ENCODE measurements at regions of chr5 and their contacts with region 1.

Region 1: DNA sequence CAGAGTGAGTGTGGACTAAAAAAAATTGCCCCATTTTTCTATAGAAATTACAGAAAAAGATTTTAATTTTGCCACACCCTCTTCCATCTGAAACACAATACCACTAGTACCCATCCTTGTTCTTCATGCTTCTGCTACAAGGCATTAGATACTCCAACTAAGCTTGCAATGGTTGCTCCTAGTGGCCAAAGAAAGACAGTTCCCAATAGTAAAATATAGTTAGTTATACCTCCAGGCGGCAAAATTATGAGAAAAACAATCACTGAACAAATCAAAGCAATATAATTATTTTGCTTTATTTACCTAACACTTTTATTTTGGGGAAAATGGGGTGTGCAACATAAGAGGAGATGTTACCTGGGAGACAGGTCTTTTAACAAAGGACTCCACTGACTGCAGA is 101.2 kb downstream of the RAPGEF6 start:
- DNase-seq: peak in 1 of 35 experiments; percentile 46
- ATAC-seq: no peak
- H3K4me3 ChIP-seq: no peak overlapping the region
- H3K4me3 Mint-ChIP-seq: peak overlapping the region in 2 of 3 donors; percentile 11 to 72
- H3K27ac ChIP-seq: peak overlapping the region; percentile 33
- H3K27ac Mint-ChIP-seq: peak overlapping the region; percentile 73 to 90
- H3K4me1 ChIP-seq: peaks cover 26 to 74% of the 10 kb centered on the region in 2 experiments
- H3K4me1 Mint-ChIP-seq: peaks cover 80 to 84% (median 81%) of the 10 kb centered on the region in 3 donors
- H3K27me3 ChIP-seq: no peaks in the 10 kb centered on the region
- H3K27me3 Mint-ChIP-seq: no peaks in the 10 kb centered on the region

Region 2: DNA sequence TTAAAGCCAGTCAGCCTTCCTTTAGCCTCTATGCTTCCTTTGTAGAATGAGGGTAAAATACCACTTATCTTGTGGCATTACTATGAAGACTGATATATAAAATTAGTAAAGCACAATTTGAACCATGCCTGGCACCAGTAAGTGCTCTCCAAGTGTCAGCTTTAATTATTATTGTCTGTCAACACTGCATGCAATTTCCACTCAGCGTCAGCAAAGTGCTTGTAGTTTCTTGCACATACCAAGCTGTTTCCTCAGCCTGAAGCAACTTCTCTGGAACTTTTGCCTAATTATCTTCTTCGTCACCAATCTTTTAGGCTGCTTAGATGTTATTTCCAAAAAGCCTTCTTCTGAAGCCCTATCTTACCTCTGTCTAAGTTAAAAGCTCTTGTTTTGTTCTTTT is 92.7 kb before region 1 on chr5:
- CTCF ChIA-PET with region 1: no interaction called
- POLR2A ChIA-PET with region 1: no interaction called
- DNase-seq: no peak
- ATAC-seq: no peak
- H3K4me3 ChIP-seq: no peak overlapping the region
- H3K4me3 Mint-ChIP-seq: no peak overlapping the region
- H3K27ac ChIP-seq: no peak overlapping the region
- H3K27ac Mint-ChIP-seq: peak overlapping the region; percentile 29 to 63
- H3K4me1 ChIP-seq: no peaks in the 10 kb centered on the region
- H3K4me1 Mint-ChIP-seq: peaks cover 11 to 23% (median 18%) of the 10 kb centered on the region in 3 donors
- H3K27me3 ChIP-seq: no peaks in the 10 kb centered on the region
- H3K27me3 Mint-ChIP-seq: no peaks in the 10 kb centered on the region

Region 3: DNA sequence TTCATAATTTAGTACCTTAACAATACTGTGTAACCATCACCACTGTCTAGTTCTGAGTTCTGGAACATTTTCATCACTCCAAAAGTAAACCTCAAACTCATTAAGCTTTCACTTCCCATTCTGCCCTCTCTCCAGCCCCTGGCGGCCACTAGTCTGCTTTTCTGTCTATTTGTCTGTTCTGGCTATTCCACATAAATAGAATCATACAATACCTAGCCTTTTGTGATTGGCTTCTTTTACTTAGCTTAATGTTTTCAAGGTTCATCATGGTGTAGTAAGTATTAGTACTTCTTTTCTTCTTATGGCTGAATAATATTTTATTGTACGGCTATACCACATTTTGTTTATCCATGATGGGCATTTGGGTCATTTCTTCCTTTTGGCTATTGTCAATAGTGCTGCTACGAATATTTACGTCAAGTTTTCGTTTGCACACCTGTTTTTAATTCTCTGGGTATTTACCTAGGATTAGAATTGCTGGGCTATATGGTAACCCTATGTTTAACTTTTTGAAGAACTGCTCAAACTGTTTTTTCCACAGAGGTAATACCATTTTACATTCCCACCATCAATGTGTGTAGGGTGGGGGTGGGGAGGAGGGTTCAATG is 37.3 kb before region 1 on chr5:
- CTCF ChIA-PET with region 1: interaction called in 1 of 2 experiments, 3 read pairs
- POLR2A ChIA-PET with region 1: interaction called in 1 of 2 experiments, 10 read pairs
- DNase-seq: no peak
- ATAC-seq: no peak
- H3K4me3 ChIP-seq: no peak overlapping the region
- H3K4me3 Mint-ChIP-seq: no peak overlapping the region
- H3K27ac ChIP-seq: no peak overlapping the region
- H3K27ac Mint-ChIP-seq: peak overlapping the region; percentile 63 to 75
- H3K4me1 ChIP-seq: no peaks in the 10 kb centered on the region
- H3K4me1 Mint-ChIP-seq: peaks cover 27 to 46% (median 29%) of the 10 kb centered on the region in 3 donors
- H3K27me3 ChIP-seq: no peaks in the 10 kb centered on the region
- H3K27me3 Mint-ChIP-seq: no peaks in the 10 kb centered on the region

Region 4: GRCh38 chr5:131514316-131515283 is 19.2 kb before region 1 on chr5:
- CTCF ChIA-PET with region 1: interaction called, 8 to 28 read pairs
- POLR2A ChIA-PET with region 1: interaction called in 1 of 2 experiments, 6 read pairs
- DNase-seq: peak in 5 of 35 experiments; percentile 16 to 75 (median 21)
- ATAC-seq: peak; percentile 82 to 88 (median 86)
- H3K4me3 ChIP-seq: peak overlapping the region in 1 of 2 donors; percentile 30
- H3K4me3 Mint-ChIP-seq: peak overlapping the region; percentile 65 to 85 (median 82)
- H3K27ac ChIP-seq: peak overlapping the region; percentile 75
- H3K27ac Mint-ChIP-seq: peak overlapping the region; percentile 94 to 95
- H3K4me1 ChIP-seq: peaks cover 19 to 31% of the 10 kb centered on the region in 2 experiments
- H3K4me1 Mint-ChIP-seq: peaks cover 73 to 78% (median 78%) of the 10 kb centered on the region in 3 donors
- H3K27me3 ChIP-seq: no peaks in the 10 kb centered on the region
- H3K27me3 Mint-ChIP-seq: no peaks in the 10 kb centered on the region